GM18951 (cell line): ENCODE measurements at regions of chr11 and their contacts with region 1.

Region 1: GRCh38 chr11:109939166-109939810 is 153.9 kb upstream of the ZC3H12C start:
- POLR2A ChIP-seq: no peak

Region 2: DNA sequence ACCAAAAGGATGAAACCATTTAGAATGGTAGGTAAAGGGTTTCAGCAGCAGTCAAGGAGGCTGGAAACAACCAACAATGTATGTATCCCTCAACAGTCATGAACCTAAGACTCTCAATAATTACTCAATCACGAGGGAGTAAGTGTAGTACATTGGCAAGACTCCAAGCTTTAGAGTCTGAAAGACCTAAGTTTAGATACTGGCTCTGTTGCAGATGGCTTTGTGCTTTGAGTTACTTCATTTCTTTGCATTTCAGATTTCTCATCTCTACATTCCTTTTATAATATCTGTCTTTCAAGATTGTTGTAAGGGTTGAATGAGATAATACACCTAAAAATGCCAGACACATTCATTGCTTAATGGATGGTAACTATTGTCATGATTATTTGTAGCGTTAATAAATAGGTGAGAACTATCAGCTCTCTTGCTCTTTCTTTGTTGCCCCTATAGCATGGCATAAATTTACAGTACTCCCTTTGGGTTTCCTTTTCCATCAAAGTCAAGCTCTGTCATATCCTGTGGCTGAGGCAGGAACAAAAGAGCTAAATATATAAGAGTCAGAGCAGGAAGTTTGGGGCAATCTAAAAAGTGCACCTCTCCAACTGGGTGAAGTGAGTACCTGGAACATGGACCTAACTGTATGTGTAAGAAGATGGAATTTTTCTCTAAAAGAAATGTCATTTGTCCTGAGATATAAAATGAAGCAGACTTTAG is 74.3 kb before region 1 on chr11:
- in situ Hi-C with region 1: loop called (anchors 5 kb)
- POLR2A ChIP-seq: no peak

Region 3: GRCh38 chr11:110069158-110069737 is 130.0 kb after region 1 on chr11:
- in situ Hi-C with region 1: no loop called
- POLR2A ChIP-seq: no peak